ENCODE measurements at regions of chr15 and their contacts with region 1.

Region 1: GRCh38 chr15:59993950-59994401 is 10.1 kb upstream of the FOXB1 start:
- DNase-seq: no peak
- ATAC-seq: peak; percentile 73
- H3K4me3 ChIP-seq: no peak overlapping the region
- H3K27ac ChIP-seq: no peak overlapping the region
- H3K4me1 ChIP-seq: peaks cover 11% of the 10 kb centered on the region
- H3K27me3 ChIP-seq: peaks cover 10 to 58% of the 10 kb centered on the region in 2 experiments
- CTCF ChIP-seq: no peak
- EP300 ChIP-seq: no peak
- POLR2A ChIP-seq: no peak
- RAD21 ChIP-seq: no peak

Region 2: GRCh38 chr15:59966262-59966661 is 27.7 kb before region 1 on chr15:
- CTCF ChIA-PET with region 1: no interaction called
- POLR2A ChIA-PET with region 1: no interaction called
- in situ Hi-C with region 1: no loop called
- intact Hi-C with region 1: loop called (anchors 1 kb)
- DNase-seq: no peak
- ATAC-seq: no peak
- H3K4me3 ChIP-seq: no peak overlapping the region
- H3K27ac ChIP-seq: no peak overlapping the region
- H3K4me1 ChIP-seq: no peaks in the 10 kb centered on the region
- H3K27me3 ChIP-seq: no peaks in the 10 kb centered on the region; a peak in 1 of 5 replicates
- CTCF ChIP-seq: no peak
- EP300 ChIP-seq: no peak
- POLR2A ChIP-seq: no peak
- RAD21 ChIP-seq: no peak

Measured in HepG2 (cell line).